ENCODE measurements at regions of chr2 and their contacts with region 1.

Region 1: DNA sequence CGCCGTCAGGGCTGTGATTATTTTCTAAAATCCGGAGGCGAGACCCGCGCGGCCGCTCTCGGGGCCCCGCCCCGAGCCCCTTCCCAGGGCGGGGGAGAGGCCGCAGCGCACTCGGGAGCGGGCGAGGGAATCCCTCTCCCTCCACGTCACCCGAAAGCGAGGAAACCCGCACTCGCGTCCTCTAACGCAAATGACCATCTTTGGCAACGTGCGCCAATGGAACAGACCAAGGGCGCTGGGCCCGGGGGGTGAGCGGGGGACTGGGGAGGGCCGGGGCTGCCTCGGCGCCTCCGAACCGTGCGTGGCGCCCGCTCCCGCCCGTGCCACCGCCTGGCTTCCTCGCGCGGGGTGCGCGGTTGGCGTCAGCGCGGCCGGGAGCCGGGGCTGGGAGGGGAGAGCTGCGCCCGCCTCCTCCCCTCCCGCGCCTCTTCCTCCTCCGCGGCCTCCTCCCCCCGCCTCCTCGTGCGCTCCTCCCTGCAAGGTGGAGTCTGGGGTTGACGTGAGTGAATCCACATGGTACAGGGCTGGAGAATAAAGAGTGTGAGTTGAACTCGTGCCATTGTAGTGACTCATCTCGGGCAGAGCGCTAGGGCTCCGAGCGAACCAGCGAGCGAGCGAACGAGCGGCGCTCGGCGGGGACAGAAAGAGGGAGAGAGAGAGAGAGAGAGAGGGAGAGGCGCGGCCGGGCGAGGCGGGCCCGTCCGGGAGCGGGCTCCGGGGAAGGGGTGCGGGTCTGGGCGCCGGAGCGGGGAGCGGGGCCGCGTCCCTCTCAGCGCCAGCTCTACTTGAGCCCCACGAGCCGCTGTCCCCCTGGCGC is at the start of gene FOSL2:
- DNase-seq: peak; percentile 97
- H3K4me3 Mint-ChIP-seq: peak within 1 kb of the TSS; percentile 94
- H3K27ac Mint-ChIP-seq: peak within 1 kb of the TSS; percentile 99
- H3K4me1 Mint-ChIP-seq: peaks cover 30% of the 10 kb centered on the region
- H3K27me3 Mint-ChIP-seq: no peaks in the 10 kb centered on the region
- total RNA-seq, gene FOSL2: 102 to 110 TPM

Region 2: GRCh38 chr2:27489498-27490397 is 902.8 kb before region 1 on chr2 and contains the start of gene IFT172:
- CTCF ChIA-PET with region 1: no interaction called
- intact Hi-C with region 1: loop called (anchors 1 kb)
- DNase-seq: peak; percentile 100
- H3K4me3 Mint-ChIP-seq: peak within 1 kb of the TSS; percentile 87
- H3K27ac Mint-ChIP-seq: peak within 1 kb of the TSS; percentile 66
- H3K4me1 Mint-ChIP-seq: peaks cover 20% of the 10 kb centered on the region
- H3K27me3 Mint-ChIP-seq: peaks cover 10% of the 10 kb centered on the region
- total RNA-seq, gene IFT172: 9.2 to 12.7 TPM

Region 3: GRCh38 chr2:27771548-27772335 is 620.8 kb before region 1 on chr2 and contains the start of gene MRPL33:
- CTCF ChIA-PET with region 1: interaction called, 3 read pairs
- intact Hi-C with region 1: loop called (anchors 1 kb)
- DNase-seq: peak; percentile 95
- H3K4me3 Mint-ChIP-seq: peak within 1 kb of the TSS; percentile 98
- H3K27ac Mint-ChIP-seq: peak within 1 kb of the TSS; percentile 98
- H3K4me1 Mint-ChIP-seq: peaks cover 36% of the 10 kb centered on the region
- H3K27me3 Mint-ChIP-seq: no peaks in the 10 kb centered on the region
- total RNA-seq, gene MRPL33: 57.4 to 60.5 TPM

Region 4: GRCh38 chr2:28250006-28250405 is 142.5 kb before region 1 on chr2:
- CTCF ChIA-PET with region 1: no interaction called
- intact Hi-C with region 1: loop called (anchors 1 kb)
- DNase-seq: no peak
- H3K4me3 Mint-ChIP-seq: no peak overlapping the region
- H3K27ac Mint-ChIP-seq: no peak overlapping the region
- H3K4me1 Mint-ChIP-seq: peaks cover 28% of the 10 kb centered on the region
- H3K27me3 Mint-ChIP-seq: no peaks in the 10 kb centered on the region

Region 5: DNA sequence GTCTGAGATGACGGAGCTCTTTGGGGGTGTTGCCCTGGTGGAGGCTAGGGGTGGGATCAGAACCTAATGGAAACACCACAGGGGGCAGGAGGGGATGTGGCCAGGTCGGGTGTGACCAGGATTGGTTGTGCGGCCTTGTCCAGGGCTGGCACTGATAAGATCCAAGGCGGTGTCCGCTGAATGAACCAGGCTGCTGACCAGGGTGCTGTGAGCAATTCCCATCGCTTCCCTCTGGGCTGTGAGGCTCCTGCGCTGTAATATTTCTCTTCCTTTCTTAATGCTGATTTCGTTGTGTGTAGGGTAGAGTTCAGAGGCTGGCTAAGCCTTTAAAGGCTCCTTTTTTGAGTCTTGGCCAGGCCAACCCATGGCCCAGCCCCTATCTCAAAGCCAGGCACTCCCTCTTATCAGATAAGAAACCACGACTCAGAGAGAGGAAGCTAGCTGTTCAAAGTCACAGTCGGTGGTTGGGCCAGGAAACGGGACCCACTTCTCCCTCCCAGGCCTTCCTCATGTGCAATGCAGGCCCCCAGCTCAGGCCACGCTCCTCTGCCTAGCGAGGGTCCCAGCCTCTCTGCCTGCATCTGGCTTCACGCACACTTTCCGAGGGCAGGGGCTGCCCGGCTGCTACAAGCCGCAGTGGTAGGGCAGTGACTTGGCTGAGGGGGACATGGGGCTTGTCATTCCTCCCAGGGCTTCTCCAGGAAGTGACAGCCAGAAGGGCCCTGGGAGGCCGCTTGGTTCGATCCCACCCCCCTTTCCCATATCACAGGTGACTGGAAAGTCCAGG is 25.8 kb before region 1 on chr2:
- CTCF ChIA-PET with region 1: interaction called, 4 read pairs
- intact Hi-C with region 1: loop called (anchors 2 kb)
- DNase-seq: peak; percentile 62
- H3K4me3 Mint-ChIP-seq: peak overlapping the region; percentile 17
- H3K27ac Mint-ChIP-seq: peak overlapping the region; percentile 59
- H3K4me1 Mint-ChIP-seq: peaks cover 37% of the 10 kb centered on the region
- H3K27me3 Mint-ChIP-seq: no peaks in the 10 kb centered on the region

Region 6: DNA sequence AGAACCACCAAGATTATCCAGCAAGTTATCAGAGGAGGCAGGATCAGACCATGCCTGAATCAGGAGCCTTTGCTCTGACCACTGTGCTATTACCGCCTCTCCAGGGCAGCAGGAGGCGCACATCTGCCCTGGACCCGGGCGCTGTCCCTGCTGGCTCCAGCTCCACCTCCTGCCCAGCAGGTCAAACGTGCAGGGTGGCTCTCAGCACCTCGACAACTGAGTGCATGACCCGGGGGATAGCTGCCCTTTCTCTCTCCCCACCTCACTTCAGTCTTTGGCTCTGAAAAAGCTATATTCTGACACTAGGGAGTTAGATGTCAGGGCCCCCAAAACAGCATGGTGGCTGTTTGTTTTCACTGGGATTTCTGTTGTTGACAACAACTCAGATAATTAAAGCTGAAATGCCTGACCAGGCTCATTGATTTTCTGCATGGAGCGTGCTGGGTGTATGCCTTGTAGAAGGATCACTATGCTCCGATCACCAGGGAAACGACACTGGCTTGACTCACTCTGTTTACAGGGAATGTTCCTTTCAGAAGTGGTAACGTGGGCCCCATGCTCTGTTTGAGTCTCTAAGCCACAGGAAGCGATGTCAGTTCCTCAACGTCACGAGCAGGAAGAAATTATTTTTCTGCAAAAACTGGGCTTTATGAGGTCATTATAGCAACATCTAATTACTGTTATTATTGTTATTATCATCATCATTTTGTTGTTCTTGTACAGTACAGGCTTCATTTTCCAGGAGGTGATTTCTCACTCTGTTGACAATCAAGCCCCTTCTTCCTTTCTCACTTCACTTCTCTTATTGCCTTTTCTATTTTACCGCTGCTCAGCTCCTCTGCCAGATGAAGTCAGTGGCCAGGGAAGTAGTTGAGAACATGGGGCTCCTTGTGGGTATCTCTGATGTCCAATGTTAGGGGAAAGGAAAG is 228.9 kb after region 1 on chr2:
- CTCF ChIA-PET with region 1: no interaction called
- intact Hi-C with region 1: loop called (anchors 5 kb)
- DNase-seq: peak; percentile 91
- H3K4me3 Mint-ChIP-seq: peak overlapping the region; percentile 41
- H3K27ac Mint-ChIP-seq: peak overlapping the region; percentile 94
- H3K4me1 Mint-ChIP-seq: peaks cover 92% of the 10 kb centered on the region
- H3K27me3 Mint-ChIP-seq: no peaks in the 10 kb centered on the region